ENCODE measurements at regions of chr3 and their contacts with region 1.

Region 1: DNA sequence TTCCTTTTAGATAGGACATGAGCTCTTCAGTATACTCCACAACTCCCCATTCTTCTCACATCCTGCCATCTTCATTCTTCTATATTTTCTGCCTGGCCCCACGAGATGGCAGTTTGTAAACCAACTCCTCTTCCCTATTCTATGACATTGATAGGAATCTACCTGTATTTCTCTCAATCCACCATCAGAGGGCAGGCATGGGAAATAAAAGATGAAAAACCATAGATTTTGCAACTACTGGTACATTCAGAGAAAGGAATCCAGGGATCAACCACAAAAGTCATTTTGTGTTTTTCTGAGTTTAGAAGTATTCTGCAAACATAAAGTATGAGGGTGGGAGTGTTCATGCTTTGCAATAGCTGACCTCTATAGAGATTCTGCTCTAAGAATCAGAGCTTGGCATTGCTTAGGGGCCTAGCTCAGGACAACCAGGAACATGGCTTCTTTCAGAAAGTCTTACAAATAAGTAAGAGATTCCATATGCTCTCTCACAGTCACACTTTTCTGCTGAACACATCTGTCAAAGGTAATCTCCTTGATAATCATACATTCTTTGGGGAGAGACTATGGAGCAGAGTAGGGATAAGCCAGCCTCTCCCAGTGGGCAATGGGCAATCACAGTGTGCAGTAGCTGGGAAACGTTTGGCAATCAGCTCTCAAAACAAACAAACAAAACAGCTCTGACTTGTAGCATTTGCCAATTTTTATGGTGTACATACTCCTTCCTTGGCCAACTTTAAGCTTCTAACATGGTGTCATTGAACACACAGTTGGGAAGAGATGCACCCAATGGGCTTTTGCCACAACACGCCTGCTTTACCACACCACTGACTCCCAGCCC is 43.1 kb upstream of the SLC25A36 start:
- DNase-seq: peak; percentile 72
- H3K4me3 ChIP-seq: no peak overlapping the region
- H3K27ac ChIP-seq: peak overlapping the region; percentile 3
- H3K27me3 ChIP-seq: no peaks in the 10 kb centered on the region
- CTCF ChIP-seq: peak; percentile 71

Region 2: DNA sequence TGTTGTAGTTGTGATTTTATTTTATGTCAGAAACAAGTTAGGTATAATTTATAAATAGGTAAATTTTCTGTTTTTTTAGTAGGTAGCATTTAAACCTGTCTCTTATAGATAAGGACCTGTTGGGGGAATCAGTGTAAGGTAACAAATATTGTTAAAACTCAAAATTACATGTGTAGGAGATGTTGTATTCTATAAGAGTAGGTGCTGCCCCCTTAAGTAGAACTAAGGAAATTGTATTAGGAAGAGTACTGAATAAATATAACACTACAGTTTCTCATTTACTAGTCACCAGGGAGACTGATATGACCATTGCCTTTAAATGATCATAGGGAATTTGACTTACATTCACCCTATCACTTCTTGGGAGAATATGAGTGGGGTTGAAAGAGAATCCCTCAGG is 74.3 kb after region 1 on chr3:
- CTCF ChIA-PET with region 1: interaction called, 20 read pairs
- POLR2A ChIA-PET with region 1: no interaction called
- DNase-seq: no peak
- H3K4me3 ChIP-seq: no peak overlapping the region
- H3K27ac ChIP-seq: no peak overlapping the region
- H3K27me3 ChIP-seq: no peaks in the 10 kb centered on the region
- CTCF ChIP-seq: peak; percentile 54

Region 3: DNA sequence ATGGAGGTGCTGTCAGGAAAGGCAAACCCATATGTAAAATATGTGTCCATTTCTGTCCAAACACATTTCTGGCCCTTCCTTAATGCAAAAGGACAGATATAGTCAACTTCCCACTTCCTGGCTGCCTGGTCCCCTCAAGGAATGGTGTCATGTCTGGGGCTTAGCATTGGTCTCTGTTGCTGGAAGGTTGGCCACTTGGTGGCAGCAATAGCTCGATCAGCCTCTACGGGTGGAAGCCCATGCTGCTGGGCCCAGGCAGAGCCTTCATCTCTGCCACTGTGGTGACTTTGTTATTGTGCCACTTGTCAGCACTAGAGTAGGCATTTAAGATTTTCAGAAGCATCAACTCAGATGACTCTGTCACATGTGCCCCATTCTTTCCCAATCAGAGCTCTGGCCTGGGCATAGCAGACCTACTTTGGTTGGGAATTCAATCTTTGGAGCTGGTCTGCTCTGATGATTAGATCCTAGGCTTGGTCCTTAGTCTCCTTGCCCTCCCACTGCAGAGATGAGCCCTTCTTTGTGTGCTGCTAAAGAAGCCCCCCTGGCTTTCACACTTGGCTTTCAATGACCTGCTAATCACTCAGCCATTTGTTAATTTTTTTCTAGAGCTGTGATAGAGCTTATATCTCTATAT is 101.6 kb after region 1 on chr3:
- CTCF ChIA-PET with region 1: interaction called, 13 read pairs
- POLR2A ChIA-PET with region 1: no interaction called
- DNase-seq: peak; percentile 7
- H3K4me3 ChIP-seq: no peak overlapping the region
- H3K27ac ChIP-seq: no peak overlapping the region
- H3K27me3 ChIP-seq: peaks cover 6% of the 10 kb centered on the region
- CTCF ChIP-seq: peak; percentile 78

Region 4: GRCh38 chr3:141105828-141106628 is 207.5 kb after region 1 on chr3:
- CTCF ChIA-PET with region 1: interaction called, 16 read pairs
- POLR2A ChIA-PET with region 1: no interaction called
- DNase-seq: peak; percentile 69
- H3K4me3 ChIP-seq: no peak overlapping the region
- H3K27ac ChIP-seq: no peak overlapping the region
- H3K27me3 ChIP-seq: peaks cover 26% of the 10 kb centered on the region
- CTCF ChIP-seq: peak; percentile 74

Measured in AG04450 (cell line).